OCI-LY7 (cell line): ENCODE measurements at regions of chr6 and their contacts with region 1.

Region 1: DNA sequence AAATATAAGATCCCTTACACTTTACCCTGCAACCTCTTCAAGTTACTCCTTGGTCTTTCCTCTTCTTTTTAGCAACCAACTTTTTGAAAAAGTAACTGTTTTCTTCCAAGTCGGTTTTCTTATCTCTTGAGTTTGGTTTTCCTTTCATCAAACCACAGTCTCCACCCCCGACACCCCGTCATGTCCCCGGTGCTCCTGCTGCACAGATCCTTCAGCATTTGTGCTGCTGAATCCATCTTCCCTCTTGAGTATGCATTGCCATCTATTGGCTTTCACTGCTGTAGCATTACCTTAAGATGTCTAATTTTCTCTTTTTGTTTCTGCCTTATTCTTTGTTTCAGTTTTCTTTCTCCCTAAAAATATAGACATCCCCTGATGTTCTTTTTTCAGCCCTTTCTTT is 11.9 kb upstream of the TNFRSF21 start:
- DNase-seq: no peak
- H3K4me3 ChIP-seq: no peak overlapping the region
- H3K27ac ChIP-seq: no peak overlapping the region
- H3K4me1 ChIP-seq: peaks cover 6% of the 10 kb centered on the region
- CTCF ChIP-seq: no peak

Region 2: DNA sequence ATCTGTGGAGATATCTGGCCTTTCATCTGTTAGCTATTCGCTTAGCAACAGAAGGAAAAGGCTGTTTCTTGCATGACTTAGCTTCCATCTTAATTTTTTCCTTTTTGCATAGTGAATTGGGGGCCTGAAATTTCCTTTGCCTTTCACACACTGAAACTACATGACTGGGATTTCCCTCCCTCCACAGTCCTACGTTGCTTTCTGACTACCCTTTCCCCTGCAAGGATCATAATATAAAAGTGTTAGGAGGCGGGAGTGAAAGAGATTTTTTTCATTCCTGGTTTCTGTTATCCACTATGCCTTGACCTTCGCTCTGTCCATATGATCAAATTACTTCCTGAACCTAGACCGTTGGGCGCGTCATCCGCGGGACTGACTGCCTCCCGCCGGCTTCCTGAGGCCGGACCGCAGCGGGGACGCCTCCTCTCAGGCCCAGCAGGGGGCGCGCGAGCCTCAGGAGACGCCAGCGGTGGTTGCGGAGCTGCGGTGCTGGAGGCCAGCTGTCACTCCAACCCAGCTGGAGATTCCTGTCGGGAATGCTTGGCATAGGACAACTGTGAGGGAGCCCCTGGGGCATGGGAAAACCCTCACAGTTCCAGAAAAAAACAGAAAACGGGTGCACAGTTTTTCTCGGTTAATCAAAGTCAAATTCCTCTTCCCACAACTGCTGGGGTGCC is 472.8 kb before region 1 on chr6:
- CTCF ChIA-PET with region 1: no interaction called
- POLR2A ChIA-PET with region 1: no interaction called
- intact Hi-C with region 1: loop called (anchors 10 kb)
- DNase-seq: peak; percentile 57
- H3K4me3 ChIP-seq: peak overlapping the region; percentile 29
- H3K27ac ChIP-seq: no peak overlapping the region
- H3K4me1 ChIP-seq: no peaks in the 10 kb centered on the region
- CTCF ChIP-seq: peak; percentile 91

Region 3: GRCh38 chr6:46932526-46933319 is 388.9 kb before region 1 on chr6:
- CTCF ChIA-PET with region 1: no interaction called
- POLR2A ChIA-PET with region 1: no interaction called
- intact Hi-C with region 1: no loop called
- DNase-seq: no peak
- H3K4me3 ChIP-seq: no peak overlapping the region
- H3K27ac ChIP-seq: no peak overlapping the region
- H3K4me1 ChIP-seq: no peaks in the 10 kb centered on the region
- CTCF ChIP-seq: no peak

Region 4: GRCh38 chr6:47235964-47236760 is 85.4 kb before region 1 on chr6:
- CTCF ChIA-PET with region 1: no interaction called
- POLR2A ChIA-PET with region 1: no interaction called
- intact Hi-C with region 1: no loop called
- DNase-seq: peak; percentile 42
- H3K4me3 ChIP-seq: no peak overlapping the region
- H3K27ac ChIP-seq: peak overlapping the region; percentile 9
- H3K4me1 ChIP-seq: peaks cover 39% of the 10 kb centered on the region
- CTCF ChIP-seq: no peak

Region 5: GRCh38 chr6:47264775-47265184 is 56.8 kb before region 1 on chr6:
- CTCF ChIA-PET with region 1: no interaction called
- POLR2A ChIA-PET with region 1: no interaction called
- intact Hi-C with region 1: no loop called
- DNase-seq: no peak
- H3K4me3 ChIP-seq: no peak overlapping the region
- H3K27ac ChIP-seq: no peak overlapping the region
- H3K4me1 ChIP-seq: peaks cover 40% of the 10 kb centered on the region
- CTCF ChIP-seq: no peak

Region 6: GRCh38 chr6:47335466-47335865 is 13.9 kb after region 1 on chr6:
- CTCF ChIA-PET with region 1: no interaction called
- POLR2A ChIA-PET with region 1: interaction called, 11 read pairs
- intact Hi-C with region 1: no loop called
- DNase-seq: peak; percentile 84
- H3K4me3 ChIP-seq: peak overlapping the region; percentile 19
- H3K27ac ChIP-seq: peak overlapping the region; percentile 70
- H3K4me1 ChIP-seq: peaks cover 38% of the 10 kb centered on the region
- CTCF ChIP-seq: no peak

Region 7: GRCh38 chr6:47392251-47392650 is 70.7 kb after region 1 on chr6:
- CTCF ChIA-PET with region 1: no interaction called
- POLR2A ChIA-PET with region 1: no interaction called
- intact Hi-C with region 1: no loop called
- DNase-seq: no peak
- H3K4me3 ChIP-seq: no peak overlapping the region
- H3K27ac ChIP-seq: no peak overlapping the region
- H3K4me1 ChIP-seq: no peaks in the 10 kb centered on the region
- CTCF ChIP-seq: no peak